AG04450 (cell line): ENCODE measurements at regions of chr3 and their contacts with region 1.

Region 1: GRCh38 chr3:39288300-39288808 is 8.5 kb upstream of the CX3CR1 start:
- DNase-seq: peak; percentile 46
- H3K4me3 ChIP-seq: no peak overlapping the region
- H3K27ac ChIP-seq: no peak overlapping the region
- H3K27me3 ChIP-seq: no peaks in the 10 kb centered on the region
- CTCF ChIP-seq: peak; percentile 96

Region 2: DNA sequence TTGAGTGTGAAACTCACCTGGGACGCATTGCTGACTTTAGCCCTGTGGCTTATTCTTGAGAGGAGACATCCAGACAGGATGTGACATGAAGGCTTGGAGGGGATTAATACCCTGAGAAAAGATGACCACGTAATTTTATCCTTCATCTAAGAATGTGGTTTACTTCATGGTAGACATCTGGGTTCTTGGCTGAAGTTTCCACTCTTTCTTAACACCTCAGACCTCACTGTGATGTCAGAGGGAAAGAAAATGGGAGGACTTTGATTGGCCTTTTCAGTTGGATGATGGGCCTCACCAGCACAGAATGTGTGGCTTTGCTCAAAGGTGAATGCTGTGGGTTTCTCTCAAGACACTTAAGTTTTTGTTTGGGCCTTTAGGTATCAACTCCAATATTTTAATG is 197.4 kb before region 1 on chr3:
- CTCF ChIA-PET with region 1: interaction called, 22 read pairs
- POLR2A ChIA-PET with region 1: no interaction called
- DNase-seq: no peak
- H3K4me3 ChIP-seq: no peak overlapping the region
- H3K27ac ChIP-seq: no peak overlapping the region
- H3K27me3 ChIP-seq: no peaks in the 10 kb centered on the region
- CTCF ChIP-seq: no peak

Region 3: DNA sequence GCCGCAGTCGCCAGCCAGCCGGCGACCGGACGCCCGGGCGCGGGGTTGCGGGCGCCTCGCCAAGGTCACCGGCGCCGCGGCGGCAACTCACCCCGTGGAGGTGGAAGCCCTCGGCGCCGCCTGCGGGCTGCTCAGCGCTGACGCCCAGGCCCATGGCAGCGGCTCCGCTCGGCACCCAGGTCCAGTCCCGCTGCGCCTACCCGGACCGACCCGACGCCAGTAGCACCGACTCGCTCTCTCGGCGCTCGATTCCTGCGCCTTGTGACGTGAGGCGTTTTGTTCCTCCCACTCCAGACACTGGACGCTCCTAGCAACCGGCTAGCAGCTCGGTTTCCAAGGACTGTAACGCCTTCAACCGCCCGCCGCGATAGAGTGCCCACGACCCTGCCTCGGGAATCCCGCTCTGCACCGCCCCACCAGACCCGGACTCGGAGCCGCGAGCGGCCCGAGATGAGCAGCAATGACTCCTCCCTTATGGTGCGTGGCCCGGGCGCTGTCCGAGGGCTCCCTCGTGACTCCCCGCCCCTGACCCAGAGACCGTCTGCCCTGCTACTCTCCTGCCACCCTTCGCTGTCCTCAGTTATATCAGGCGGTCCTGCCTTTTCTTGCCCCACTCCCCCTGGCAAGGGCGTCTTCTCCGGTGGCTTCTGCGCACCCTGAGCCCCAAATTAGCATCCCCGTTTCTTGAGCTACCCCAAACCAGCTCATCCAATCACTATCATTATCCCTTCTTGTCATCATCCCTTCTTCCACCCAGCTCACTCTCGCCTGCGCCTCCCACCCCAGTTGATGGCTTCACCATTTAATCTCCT is 180.8 kb before region 1 on chr3 and contains the starts of genes GORASP1 and TTC21A:
- CTCF ChIA-PET with region 1: interaction called, 19 read pairs
- POLR2A ChIA-PET with region 1: no interaction called
- DNase-seq: peak; percentile 58
- H3K4me3 ChIP-seq: peak within 1 kb of the TSS; percentile 92
- H3K27ac ChIP-seq: peak within 1 kb of the TSS; percentile 70
- H3K27me3 ChIP-seq: no peaks in the 10 kb centered on the region
- CTCF ChIP-seq: no peak
- polyA plus RNA-seq, gene GORASP1: 43.7 and 47.6 TPM in 2 replicates
- polyA plus RNA-seq, gene TTC21A: 1.6 and 2.8 TPM in 2 replicates

Region 4: DNA sequence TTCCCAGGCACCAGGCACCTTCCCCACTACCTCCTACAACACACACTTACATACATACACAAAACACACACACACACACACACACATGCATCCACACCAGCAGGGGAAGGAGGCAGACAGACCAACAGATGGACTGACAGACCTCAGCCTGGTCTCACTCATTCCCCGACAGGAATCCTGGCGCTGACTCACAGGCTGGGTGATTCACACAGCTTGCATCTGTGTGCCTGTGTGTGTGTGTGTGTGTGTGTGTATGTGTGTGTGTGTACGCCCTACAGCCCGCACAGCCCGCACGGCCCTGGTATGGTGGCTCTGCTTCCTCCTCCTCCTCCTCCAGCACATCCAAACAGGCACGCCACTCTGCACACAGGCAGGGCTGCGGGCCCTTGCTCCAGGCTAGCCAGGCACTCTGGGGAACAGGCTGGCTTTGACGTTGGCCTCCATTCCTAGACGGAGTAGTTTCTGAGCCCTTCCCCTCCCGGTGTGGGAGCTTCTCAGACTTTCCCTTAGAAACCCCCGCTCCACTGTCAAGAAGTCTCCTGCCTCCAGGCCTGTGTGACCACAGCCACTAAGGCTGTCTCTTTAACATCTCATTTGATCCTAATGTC is 141.3 kb before region 1 on chr3:
- CTCF ChIA-PET with region 1: interaction called, 12 read pairs
- POLR2A ChIA-PET with region 1: no interaction called
- DNase-seq: peak; percentile 97
- H3K4me3 ChIP-seq: peak overlapping the region; percentile 44
- H3K27ac ChIP-seq: peak overlapping the region; percentile 94
- H3K27me3 ChIP-seq: no peaks in the 10 kb centered on the region
- CTCF ChIP-seq: no peak

Region 5: DNA sequence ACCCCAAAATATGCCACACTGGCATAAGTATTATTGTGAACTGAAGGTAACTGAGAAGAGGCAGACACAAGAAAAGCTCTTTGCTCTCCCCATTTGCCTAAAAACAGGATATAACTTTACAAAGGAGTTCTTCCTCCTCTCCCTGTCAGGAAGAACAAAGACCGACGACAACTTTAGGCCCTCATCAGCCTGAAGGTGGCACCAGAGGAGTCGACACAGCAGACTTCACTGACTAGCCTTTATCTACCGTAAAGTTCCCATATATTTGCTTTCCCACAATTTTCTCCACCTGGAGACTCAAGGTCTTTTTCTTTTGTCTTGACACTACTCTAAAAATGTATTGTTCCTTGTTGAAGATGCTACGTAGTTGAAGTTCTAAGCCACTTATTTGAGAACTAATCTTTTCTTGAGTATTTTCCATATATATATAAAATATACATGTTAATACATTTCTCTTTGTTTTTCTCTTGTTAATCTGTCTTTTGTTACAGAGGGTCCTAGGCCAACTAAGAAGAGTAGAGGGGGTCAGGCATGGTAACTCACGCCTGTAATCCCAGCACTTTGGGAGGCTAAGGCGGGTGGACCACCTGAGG is 79.8 kb before region 1 on chr3:
- CTCF ChIA-PET with region 1: interaction called, 17 read pairs
- POLR2A ChIA-PET with region 1: no interaction called
- DNase-seq: peak; percentile 15
- H3K4me3 ChIP-seq: no peak overlapping the region
- H3K27ac ChIP-seq: no peak overlapping the region
- H3K27me3 ChIP-seq: peaks cover 28% of the 10 kb centered on the region
- CTCF ChIP-seq: peak; percentile 66

Region 6: DNA sequence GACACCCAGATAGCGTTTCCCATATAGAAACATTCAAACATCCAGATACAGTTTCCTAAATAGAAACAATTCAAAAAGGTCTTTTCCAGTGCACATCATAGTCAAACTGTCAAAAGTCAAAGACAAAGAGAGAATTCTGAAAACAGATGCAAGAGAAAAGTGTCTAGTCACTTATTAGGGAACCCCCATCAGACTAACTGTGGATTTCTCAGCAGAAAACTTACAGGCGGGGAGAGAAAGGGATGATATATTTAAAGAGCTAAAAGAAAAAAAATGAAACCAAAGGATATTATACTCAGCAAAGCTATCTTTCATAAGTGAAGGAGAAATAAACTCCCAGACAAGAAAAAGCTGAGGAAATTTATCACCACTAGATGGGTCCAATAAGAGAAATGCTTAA is 13.8 kb after region 1 on chr3:
- CTCF ChIA-PET with region 1: interaction called, 17 read pairs
- POLR2A ChIA-PET with region 1: no interaction called
- DNase-seq: no peak
- H3K4me3 ChIP-seq: no peak overlapping the region
- H3K27ac ChIP-seq: no peak overlapping the region
- H3K27me3 ChIP-seq: no peaks in the 10 kb centered on the region
- CTCF ChIP-seq: no peak

Region 7: GRCh38 chr3:39350714-39351113 is 62.4 kb after region 1 on chr3:
- CTCF ChIA-PET with region 1: no interaction called
- POLR2A ChIA-PET with region 1: no interaction called
- DNase-seq: no peak
- H3K4me3 ChIP-seq: no peak overlapping the region
- H3K27ac ChIP-seq: no peak overlapping the region
- H3K27me3 ChIP-seq: no peaks in the 10 kb centered on the region
- CTCF ChIP-seq: no peak

Region 8: DNA sequence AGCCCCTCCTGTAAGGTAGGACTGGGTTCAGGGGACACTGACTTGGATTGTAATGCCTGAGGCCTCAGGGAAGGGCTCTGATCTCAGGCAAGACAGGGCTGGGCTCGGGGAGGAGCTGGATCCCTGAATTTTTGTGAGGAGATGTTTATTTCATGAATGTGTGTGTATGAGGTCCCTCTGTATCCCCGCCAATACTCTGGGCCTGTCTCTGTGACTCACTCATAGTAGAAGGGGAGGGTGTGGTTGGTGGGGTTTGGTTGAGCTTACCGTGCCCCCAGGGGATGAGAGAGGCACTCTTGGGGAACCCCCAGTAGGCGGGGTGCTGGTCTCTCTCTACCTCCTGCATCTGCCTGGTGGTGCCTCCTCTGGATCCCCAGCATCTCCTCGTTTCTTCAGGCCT is 146.2 kb after region 1 on chr3:
- CTCF ChIA-PET with region 1: no interaction called
- POLR2A ChIA-PET with region 1: no interaction called
- DNase-seq: no peak
- H3K4me3 ChIP-seq: no peak overlapping the region
- H3K27ac ChIP-seq: no peak overlapping the region
- H3K27me3 ChIP-seq: no peaks in the 10 kb centered on the region
- CTCF ChIP-seq: no peak

Region 9: DNA sequence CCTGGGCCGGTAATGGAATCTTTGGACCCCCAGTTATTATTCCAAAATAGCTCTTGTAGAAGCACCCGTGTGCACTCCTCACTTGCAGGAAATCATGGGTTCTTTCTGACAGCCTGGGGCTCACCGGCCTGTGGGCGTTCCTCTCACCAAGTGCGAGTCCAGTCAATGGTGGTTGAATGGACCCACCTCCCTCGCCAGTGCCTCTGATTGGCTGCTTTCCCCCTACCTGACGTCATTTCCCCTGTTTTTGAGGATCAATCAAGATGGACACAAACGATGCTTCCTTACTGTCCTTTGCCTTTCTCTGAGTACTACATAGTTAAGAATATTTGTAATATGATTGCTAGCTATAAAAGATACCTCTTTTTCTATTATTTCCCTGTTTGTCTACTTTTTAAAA is 197.2 kb after region 1 on chr3:
- CTCF ChIA-PET with region 1: no interaction called
- POLR2A ChIA-PET with region 1: no interaction called
- DNase-seq: no peak
- H3K4me3 ChIP-seq: no peak overlapping the region
- H3K27ac ChIP-seq: no peak overlapping the region
- H3K27me3 ChIP-seq: peaks cover 2% of the 10 kb centered on the region
- CTCF ChIP-seq: no peak

Region 10: DNA sequence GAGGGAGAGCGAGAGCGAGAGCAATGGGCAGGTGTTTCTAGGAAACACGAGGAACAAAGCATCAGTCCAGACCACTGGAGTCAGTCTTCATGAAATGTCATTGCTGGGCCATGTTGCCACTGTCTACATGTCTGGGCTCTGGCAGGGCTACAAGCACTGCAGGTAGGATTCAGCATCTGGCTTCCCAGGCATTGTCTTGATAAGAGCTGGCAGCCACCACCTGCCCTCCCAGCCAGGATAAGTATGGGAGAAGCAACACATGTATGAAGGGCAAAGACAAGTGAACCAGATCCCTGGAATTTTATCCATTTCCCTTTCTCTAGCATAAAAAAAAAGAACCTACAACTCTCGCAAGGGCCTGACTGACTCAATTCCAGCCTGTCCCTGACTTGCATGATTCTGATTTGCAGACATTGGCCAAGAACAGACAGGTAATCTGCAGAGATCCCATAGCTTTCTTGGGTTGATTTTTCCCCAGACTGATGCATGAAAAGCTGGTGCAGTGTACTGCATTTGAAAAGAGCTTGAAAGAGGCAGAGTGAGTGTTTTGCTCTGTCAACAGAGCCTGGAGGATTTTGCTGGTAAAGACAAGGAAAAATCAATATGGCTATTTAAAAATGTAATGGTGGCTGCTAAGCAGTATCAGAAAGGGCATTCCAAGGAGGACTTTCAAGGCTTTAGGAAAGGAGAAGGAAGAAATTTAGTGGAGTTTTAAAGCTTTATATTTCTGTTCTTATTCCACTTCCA is 363.8 kb after region 1 on chr3:
- CTCF ChIA-PET with region 1: no interaction called
- POLR2A ChIA-PET with region 1: no interaction called
- DNase-seq: no peak
- H3K4me3 ChIP-seq: no peak overlapping the region
- H3K27ac ChIP-seq: no peak overlapping the region
- H3K27me3 ChIP-seq: peaks cover 4% of the 10 kb centered on the region
- CTCF ChIP-seq: no peak